ENCODE measurements at regions of chr5 and their contacts with region 1.

Region 1: GRCh38 chr5:40834849-40835787 is at the start of gene RPL37:
- DNase-seq: peak; percentile 97 to 98 (median 97)
- ATAC-seq: peak; percentile 99 to 100 (median 100)
- H3K4me3 ChIP-seq: peak within 1 kb of the TSS; percentile 64 to 82 (median 74)
- H3K27ac ChIP-seq: peak within 1 kb of the TSS; percentile 93 to 99 (median 98)
- H3K4me1 ChIP-seq: peaks cover 0 to 40% (median 23%) of the 10 kb centered on the region in 12 donors
- H3K27me3 ChIP-seq: no peaks in the 10 kb centered on the region
- CTCF ChIP-seq: no peak
- POLR2A ChIP-seq: peak in 1 of 2 donors; percentile 75
- total RNA-seq, gene RPL37: 32.7 to 838 (median 595) TPM

Region 2: DNA sequence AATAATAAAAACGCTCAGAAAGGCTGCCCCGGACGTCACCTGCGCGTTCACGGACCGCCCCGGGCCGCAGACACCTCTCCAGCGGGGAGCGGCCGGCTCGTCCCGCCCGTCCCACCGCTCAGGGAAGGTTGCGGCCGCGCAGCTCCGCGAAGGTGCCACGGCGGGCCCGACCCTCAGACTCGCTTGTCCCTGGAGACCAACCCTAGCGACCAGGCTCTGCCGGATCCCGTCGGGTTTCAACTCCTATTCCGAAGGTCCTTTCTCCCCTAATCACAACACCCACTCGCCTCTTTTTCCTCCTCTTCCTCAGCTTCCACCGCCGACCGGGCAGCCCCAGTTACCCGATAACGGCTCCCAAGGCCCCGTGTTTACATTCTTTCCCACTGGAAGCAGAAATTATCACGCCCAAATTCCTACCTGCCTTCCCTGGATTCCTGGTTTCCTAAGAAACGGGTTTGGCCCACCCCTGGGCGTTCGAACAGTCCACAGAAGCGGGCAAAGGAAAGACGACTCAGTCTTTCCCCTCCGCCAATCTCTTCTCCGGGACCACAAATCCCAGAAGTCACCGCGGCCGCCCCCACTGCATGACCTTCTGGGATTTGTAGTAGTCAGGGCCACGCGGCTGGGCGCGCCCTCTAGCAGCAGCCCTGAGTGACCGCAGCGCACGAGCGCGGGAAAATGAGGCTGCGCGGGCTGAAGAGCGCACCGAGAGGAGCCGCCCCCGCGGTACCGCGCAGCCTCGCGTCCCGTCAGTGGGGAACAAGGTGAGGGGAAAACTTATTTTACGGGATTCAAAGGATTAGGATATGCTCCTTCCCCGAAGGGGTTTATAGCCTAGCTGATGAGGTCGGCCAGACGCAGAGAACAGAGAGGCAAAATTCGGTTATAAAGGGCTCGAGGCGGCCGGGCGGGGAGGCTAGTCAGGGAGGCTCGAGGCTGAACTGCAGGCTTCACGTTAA is 79.4 kb before region 1 on chr5 and contains the start of gene TTC33:
- intact Hi-C with region 1: loop called in 9 of 10 experiments (anchors 2 to 10 kb)
- DNase-seq: peak; percentile 95 to 97 (median 96)
- ATAC-seq: peak; percentile 98 to 99 (median 99)
- H3K4me3 ChIP-seq: peak within 1 kb of the TSS; percentile 57 to 98 (median 84)
- H3K27ac ChIP-seq: peak within 1 kb of the TSS; percentile 49 to 95 (median 90)
- H3K4me1 ChIP-seq: peaks cover 0 to 20% (median 11%) of the 10 kb centered on the region in 12 donors
- H3K27me3 ChIP-seq: no peaks in the 10 kb centered on the region
- CTCF ChIP-seq: peak; percentile 43 to 88 (median 75)
- POLR2A ChIP-seq: peak in 1 of 2 donors; percentile 59
- total RNA-seq, gene TTC33: 11.3 to 20.0 (median 14.2) TPM

Region 3: GRCh38 chr5:40798012-40798855 is 36.9 kb before region 1 on chr5 and contains the start of gene PRKAA1:
- intact Hi-C with region 1: loop called in 2 of 10 experiments (anchors 1 kb)
- DNase-seq: peak; percentile 90 to 95 (median 92)
- ATAC-seq: peak; percentile 76 to 97 (median 94)
- H3K4me3 ChIP-seq: peak within 1 kb of the TSS; percentile 74 to 99 (median 92)
- H3K27ac ChIP-seq: peak within 1 kb of the TSS; percentile 84 to 98 (median 92)
- H3K4me1 ChIP-seq: peaks cover 0 to 38% (median 23%) of the 10 kb centered on the region in 12 donors
- H3K27me3 ChIP-seq: no peaks in the 10 kb centered on the region
- CTCF ChIP-seq: peak; percentile 57 to 90 (median 78)
- POLR2A ChIP-seq: peak in 1 of 2 donors; percentile 27
- total RNA-seq, gene PRKAA1: 36.4 to 53.3 (median 43.2) TPM

Measured in heart left ventricle (tissue), 16 donors.